CD8-positive, alpha-beta memory T cell (primary cell): ENCODE measurements at regions of chr17 and their contacts with region 1.

Region 1: GRCh38 chr17:39621523-39622379 is 5.0 kb upstream of the PPP1R1B start:
- DNase-seq: peak; percentile 80 to 89 (median 83)
- H3K4me3 ChIP-seq: peak overlapping the region; percentile 50
- H3K4me3 Mint-ChIP-seq: peak overlapping the region; percentile 70 to 91 (median 83)
- H3K27ac ChIP-seq: peak overlapping the region; percentile 57
- H3K27ac Mint-ChIP-seq: peak overlapping the region; percentile 80 to 92 (median 87)
- H3K4me1 ChIP-seq: peaks cover 32% of the 10 kb centered on the region
- H3K4me1 Mint-ChIP-seq: peaks cover 20 to 34% (median 22%) of the 10 kb centered on the region in 3 donors
- H3K27me3 ChIP-seq: peaks cover 17% of the 10 kb centered on the region
- H3K27me3 Mint-ChIP-seq: peaks cover 10 to 14% of the 10 kb centered on the region in 2 donors

Region 2: GRCh38 chr17:38794221-38794620 is 827.5 kb before region 1 on chr17:
- CTCF ChIA-PET with region 1: no interaction called
- POLR2A ChIA-PET with region 1: interaction called, 11 read pairs
- DNase-seq: no peak
- H3K4me3 ChIP-seq: no peak overlapping the region
- H3K4me3 Mint-ChIP-seq: peak overlapping the region in 1 of 7 donors; percentile 31
- H3K27ac ChIP-seq: no peak overlapping the region
- H3K27ac Mint-ChIP-seq: peak overlapping the region in 2 of 8 donors; percentile 65 to 68
- H3K4me1 ChIP-seq: peaks cover 24% of the 10 kb centered on the region
- H3K4me1 Mint-ChIP-seq: peaks cover 33 to 72% (median 64%) of the 10 kb centered on the region in 3 donors
- H3K27me3 ChIP-seq: no peaks in the 10 kb centered on the region
- H3K27me3 Mint-ChIP-seq: no peaks in the 10 kb centered on the region

Region 3: DNA sequence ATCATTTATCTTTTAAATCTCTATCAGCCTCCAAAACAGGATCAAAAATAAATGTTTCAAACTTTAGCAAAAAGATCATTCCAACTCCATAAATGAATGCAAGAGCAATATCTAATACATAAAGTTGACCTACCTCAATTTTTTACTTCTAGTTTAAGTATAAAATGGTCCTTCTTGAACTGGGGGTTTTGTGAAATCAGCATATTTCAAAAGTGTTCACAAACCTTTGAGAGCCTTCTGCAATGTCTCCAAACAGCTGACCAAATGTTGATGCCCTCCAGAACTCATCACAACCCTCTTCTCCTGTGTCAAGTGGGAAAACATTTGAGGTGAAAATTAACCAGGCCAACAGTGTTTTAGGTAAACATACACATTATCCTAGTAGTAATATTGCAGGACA is 178.4 kb before region 1 on chr17:
- CTCF ChIA-PET with region 1: no interaction called
- POLR2A ChIA-PET with region 1: no interaction called
- DNase-seq: no peak
- H3K4me3 ChIP-seq: no peak overlapping the region
- H3K4me3 Mint-ChIP-seq: no peak overlapping the region
- H3K27ac ChIP-seq: no peak overlapping the region
- H3K27ac Mint-ChIP-seq: no peak overlapping the region
- H3K4me1 ChIP-seq: no peaks in the 10 kb centered on the region
- H3K4me1 Mint-ChIP-seq: peaks cover 13 to 27% (median 23%) of the 10 kb centered on the region in 3 donors
- H3K27me3 ChIP-seq: no peaks in the 10 kb centered on the region
- H3K27me3 Mint-ChIP-seq: no peaks in the 10 kb centered on the region

Region 4: DNA sequence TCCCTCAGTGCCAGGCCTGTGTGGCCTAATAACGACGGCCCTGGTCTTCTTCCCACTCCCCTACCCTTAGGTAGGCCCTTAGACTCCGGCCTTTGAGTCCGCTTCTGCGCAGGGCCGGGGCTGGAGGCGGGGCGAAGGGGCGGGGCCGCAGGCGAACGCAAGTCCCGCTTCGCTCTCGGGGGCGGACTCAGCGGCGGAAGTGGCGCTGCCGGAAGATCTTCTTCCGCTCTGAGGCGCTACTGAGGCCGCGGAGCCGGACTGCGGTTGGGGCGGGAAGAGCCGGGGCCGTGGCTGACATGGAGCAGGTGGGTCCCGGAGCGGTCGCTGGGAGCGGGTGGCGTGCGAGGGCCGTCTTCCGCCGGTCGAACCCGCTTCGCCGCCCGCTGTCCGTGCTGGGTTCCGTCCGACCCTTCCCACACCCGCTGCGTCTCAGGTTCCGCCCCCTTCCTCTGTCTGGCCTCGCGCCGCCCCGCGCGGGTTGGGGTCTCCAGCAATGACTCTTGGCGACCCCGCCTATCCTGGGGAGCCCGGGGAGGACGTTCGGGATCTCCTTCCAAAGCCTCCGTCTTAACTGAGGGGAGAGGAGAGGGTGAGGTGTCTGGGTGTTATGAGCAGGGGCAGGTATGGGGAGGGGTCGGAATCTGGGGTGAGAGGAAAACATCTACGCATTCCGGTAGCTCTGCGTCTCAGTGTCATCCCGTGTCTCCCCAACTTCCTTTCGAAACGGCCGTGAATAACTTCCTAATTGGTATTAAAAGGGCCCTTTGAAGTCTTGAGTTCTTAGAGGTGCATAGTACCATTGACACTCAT is 15.4 kb after region 1 on chr17 and contains the start of gene STARD3:
- CTCF ChIA-PET with region 1: interaction called, 161 read pairs
- POLR2A ChIA-PET with region 1: interaction called, 3 read pairs
- DNase-seq: peak; percentile 84 to 93 (median 89)
- H3K4me3 ChIP-seq: peak within 1 kb of the TSS; percentile 98
- H3K4me3 Mint-ChIP-seq: peak within 1 kb of the TSS; percentile 90 to 96 (median 93)
- H3K27ac ChIP-seq: peak within 1 kb of the TSS; percentile 90
- H3K27ac Mint-ChIP-seq: peak within 1 kb of the TSS; percentile 82 to 98 (median 96)
- H3K4me1 ChIP-seq: peaks cover 55% of the 10 kb centered on the region
- H3K4me1 Mint-ChIP-seq: peaks cover 55 to 70% (median 61%) of the 10 kb centered on the region in 3 donors
- H3K27me3 ChIP-seq: no peaks in the 10 kb centered on the region
- H3K27me3 Mint-ChIP-seq: peaks cover 0 to 5% of the 10 kb centered on the region in 2 donors
- total RNA-seq, gene STARD3: 71.4 to 74.1 TPM

Region 5: DNA sequence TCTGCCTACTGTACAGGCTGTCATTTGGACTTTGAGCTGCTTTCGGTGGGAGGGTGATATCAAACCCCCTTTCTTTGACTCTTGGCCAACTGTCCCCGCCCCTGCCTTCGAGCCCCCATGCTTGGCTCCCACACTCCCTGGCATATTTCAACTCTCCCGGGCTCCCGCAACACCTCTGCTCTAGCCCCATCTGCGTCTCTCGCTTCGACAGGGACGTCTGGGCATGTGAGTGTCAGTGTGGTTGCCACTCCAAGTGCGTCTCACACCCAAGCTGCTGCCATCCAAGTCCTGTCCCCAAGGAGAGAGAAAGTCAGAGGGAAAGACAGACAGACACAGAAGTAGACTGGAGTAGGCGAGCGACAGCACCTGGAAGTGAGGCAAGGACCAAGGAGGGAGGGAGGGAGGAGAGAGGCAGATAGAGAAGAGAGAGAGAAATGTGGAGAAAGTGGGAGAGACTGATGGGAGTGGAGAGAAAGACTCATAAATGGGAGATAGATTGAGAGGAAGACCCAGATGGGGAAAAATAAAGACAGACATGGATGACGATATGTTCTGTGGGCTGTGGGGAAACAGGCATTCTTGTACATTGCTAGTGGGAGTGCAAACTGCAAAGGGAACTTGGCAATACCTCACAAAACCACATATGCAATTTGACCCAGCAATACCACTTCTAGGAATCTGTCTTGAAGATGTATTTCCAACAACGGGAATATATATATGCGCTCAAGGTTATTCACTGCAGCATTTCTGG is 27.0 kb after region 1 on chr17:
- CTCF ChIA-PET with region 1: interaction called, 54 read pairs
- POLR2A ChIA-PET with region 1: no interaction called
- DNase-seq: no peak
- H3K4me3 ChIP-seq: no peak overlapping the region
- H3K4me3 Mint-ChIP-seq: no peak overlapping the region
- H3K27ac ChIP-seq: no peak overlapping the region
- H3K27ac Mint-ChIP-seq: peak overlapping the region in 5 of 8 donors; percentile 48 to 82 (median 70)
- H3K4me1 ChIP-seq: peaks cover 13% of the 10 kb centered on the region
- H3K4me1 Mint-ChIP-seq: peaks cover 43 to 77% (median 58%) of the 10 kb centered on the region in 3 donors
- H3K27me3 ChIP-seq: no peaks in the 10 kb centered on the region
- H3K27me3 Mint-ChIP-seq: no peaks in the 10 kb centered on the region

Region 6: DNA sequence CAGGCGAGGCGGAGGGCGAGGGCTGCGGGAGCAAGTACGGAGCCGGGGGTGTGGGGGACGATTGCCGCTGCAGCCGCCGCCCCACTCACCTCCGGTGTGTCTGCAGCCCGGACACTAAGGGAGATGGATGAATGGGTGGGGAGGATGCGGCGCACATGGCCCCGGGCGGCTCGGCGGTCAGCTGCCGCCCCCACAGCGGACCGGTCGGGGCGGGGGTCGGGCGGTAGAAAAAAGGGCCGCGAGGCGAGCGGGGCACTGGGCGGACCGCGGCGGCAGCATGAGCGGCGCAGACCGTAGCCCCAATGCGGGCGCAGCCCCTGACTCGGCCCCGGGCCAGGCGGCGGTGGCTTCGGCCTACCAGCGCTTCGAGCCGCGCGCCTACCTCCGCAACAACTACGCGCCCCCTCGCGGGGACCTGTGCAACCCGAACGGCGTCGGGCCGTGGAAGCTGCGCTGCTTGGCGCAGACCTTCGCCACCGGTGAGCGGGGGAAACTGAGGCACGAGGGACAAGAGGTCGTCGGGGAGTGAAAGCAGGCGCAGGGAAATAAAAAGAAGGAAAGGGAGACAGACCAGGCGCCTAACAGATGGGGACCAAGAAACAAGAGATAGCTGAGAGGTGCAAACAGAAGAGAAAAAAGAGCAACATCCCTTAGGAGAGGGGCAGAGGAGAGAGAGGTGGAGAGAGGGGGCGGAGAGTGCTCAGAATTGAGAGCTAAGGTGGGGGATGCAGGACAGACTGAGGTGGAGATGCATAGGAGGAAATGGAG is 46.6 kb after region 1 on chr17 and contains the start of gene PNMT:
- CTCF ChIA-PET with region 1: interaction called, 54 read pairs
- POLR2A ChIA-PET with region 1: no interaction called
- DNase-seq: peak; percentile 49 to 76 (median 52)
- H3K4me3 ChIP-seq: peak within 1 kb of the TSS; percentile 37
- H3K4me3 Mint-ChIP-seq: peak within 1 kb of the TSS; percentile 7 to 88 (median 67)
- H3K27ac ChIP-seq: peak within 1 kb of the TSS; percentile 24
- H3K27ac Mint-ChIP-seq: peak within 1 kb of the TSS in 3 of 8 donors; percentile 46 to 88 (median 62)
- H3K4me1 ChIP-seq: peaks cover 6% of the 10 kb centered on the region
- H3K4me1 Mint-ChIP-seq: peaks cover 6 to 21% (median 6%) of the 10 kb centered on the region in 3 donors
- H3K27me3 ChIP-seq: no peaks in the 10 kb centered on the region
- H3K27me3 Mint-ChIP-seq: peaks cover 3 to 25% of the 10 kb centered on the region in 2 donors
- total RNA-seq, gene PNMT: not detected

Region 7: DNA sequence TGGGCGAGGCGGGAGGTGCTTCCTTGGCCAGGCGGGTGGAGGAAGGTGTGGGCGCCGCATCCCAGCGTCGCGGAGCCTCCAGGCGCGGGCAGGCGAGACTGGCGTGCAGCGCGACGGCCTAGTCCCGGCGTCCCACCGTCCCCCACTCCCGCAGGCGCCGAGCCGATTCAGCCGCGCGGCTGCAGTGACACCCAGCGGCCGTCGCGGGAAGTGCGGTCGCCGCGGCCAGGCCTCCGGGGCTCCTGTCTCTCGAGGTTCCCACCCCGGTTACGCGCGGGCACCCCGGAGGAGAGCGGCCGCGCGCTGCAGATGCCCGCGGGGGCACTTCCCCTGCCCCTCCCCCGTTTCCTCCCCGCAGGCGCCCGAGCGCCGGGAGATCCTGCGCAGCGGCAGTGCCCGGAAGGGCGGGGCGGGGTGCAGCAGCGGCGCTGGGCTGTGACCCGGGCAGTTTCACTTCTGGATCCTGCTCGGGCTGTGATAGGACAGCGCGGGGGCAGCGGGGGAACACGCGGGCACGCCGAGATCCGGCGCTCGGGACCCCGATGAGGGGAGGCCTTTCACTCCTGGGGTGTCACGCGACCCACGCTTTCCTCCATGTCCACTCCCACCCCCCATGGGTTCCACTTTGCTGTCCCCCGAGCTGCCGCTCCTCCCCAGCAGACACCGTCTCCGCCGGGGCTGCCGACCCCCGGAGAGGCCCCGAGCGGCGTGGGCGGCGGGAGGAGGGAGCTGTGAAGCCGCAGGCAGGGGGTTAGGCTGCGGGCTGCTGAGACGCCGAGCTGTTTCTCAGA is 132.6 kb after region 1 on chr17:
- CTCF ChIA-PET with region 1: interaction called, 53 read pairs
- POLR2A ChIA-PET with region 1: interaction called, 3 read pairs
- DNase-seq: peak; percentile 94 to 99 (median 98)
- H3K4me3 ChIP-seq: peak overlapping the region; percentile 81
- H3K4me3 Mint-ChIP-seq: peak overlapping the region; percentile 75 to 92 (median 82)
- H3K27ac ChIP-seq: peak overlapping the region; percentile 90
- H3K27ac Mint-ChIP-seq: peak overlapping the region; percentile 95 to 99 (median 97)
- H3K4me1 ChIP-seq: peaks cover 58% of the 10 kb centered on the region
- H3K4me1 Mint-ChIP-seq: peaks cover 57 to 62% (median 60%) of the 10 kb centered on the region in 3 donors
- H3K27me3 ChIP-seq: no peaks in the 10 kb centered on the region
- H3K27me3 Mint-ChIP-seq: peaks cover 0 to 4% of the 10 kb centered on the region in 2 donors